GM10248 (cell line): ENCODE measurements at regions of chr3 and their contacts with region 1.

Region 1: DNA sequence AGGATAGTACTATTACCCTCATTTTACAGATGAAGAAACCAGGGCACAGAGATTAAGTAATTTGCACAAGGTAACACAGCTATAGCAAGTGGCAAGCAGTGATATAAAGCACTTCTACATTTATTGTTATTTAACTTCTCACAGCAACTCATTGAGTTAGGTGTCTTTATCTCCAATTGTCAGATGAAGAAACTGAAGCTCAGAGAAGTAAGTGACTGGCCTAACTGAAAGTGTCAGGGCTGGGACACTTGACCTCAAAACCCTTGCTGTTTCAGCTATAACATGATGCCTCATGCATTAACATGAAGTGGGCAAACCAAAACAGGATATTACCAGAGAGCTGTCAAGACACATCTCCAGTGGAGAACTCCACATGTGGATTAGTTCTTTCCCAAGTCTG is 65.8 kb upstream of the LEKR1 start:
- DNase-seq: peak; percentile 21
- CTCF ChIP-seq: no peak

Region 2: GRCh38 chr3:156594219-156594683 is 166.1 kb before region 1 on chr3:
- CTCF ChIA-PET with region 1: no interaction called
- POLR2A ChIA-PET with region 1: no interaction called
- DNase-seq: no peak
- CTCF ChIP-seq: no peak

Region 3: GRCh38 chr3:156781310-156782230 is 21.2 kb after region 1 on chr3:
- CTCF ChIA-PET with region 1: interaction called, 13 read pairs
- POLR2A ChIA-PET with region 1: no interaction called
- DNase-seq: no peak
- CTCF ChIP-seq: no peak

Region 4: GRCh38 chr3:156997351-156997750 is 237.0 kb after region 1 on chr3:
- CTCF ChIA-PET with region 1: no interaction called
- POLR2A ChIA-PET with region 1: no interaction called
- DNase-seq: no peak
- CTCF ChIP-seq: no peak

Region 5: DNA sequence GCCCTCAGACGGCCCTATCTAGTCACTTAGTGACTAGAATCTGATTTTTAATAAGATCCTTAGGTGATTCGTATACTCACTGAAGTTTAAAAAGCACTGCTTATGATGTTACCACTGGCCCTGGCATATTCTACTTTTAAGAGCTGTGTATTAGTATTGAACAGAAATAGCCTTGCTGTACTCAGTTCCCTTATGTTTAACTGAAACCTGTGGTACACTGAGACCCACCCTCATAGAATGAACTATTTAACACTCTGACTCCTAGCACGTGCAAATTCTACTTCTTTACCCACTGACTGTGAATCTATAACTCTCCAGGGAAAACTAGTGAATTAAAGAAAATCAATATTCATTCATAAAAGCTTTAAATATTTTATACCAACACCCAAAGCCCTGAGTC is 290.7 kb after region 1 on chr3:
- CTCF ChIA-PET with region 1: no interaction called
- POLR2A ChIA-PET with region 1: no interaction called
- DNase-seq: no peak
- CTCF ChIP-seq: no peak